ENCODE measurements at regions of chr2 and their contacts with region 1.

Region 1: GRCh38 chr2:50469784-50470183 is 562.1 kb downstream of the NRXN1 start:
- DNase-seq: no peak
- ATAC-seq: no peak
- H3K4me3 ChIP-seq: no peak overlapping the region
- H3K27ac ChIP-seq: no peak overlapping the region
- H3K4me1 ChIP-seq: no peaks in the 10 kb centered on the region
- H3K27me3 ChIP-seq: no peaks in the 10 kb centered on the region
- CTCF ChIP-seq: no peak

Region 2: GRCh38 chr2:49901202-49902065 is 568.4 kb before region 1 on chr2:
- intact Hi-C with region 1: loop called in 1 of 2 experiments (anchors 5 kb)
- DNase-seq: no peak
- ATAC-seq: no peak
- H3K4me3 ChIP-seq: no peak overlapping the region
- H3K27ac ChIP-seq: no peak overlapping the region
- H3K4me1 ChIP-seq: no peaks in the 10 kb centered on the region
- H3K27me3 ChIP-seq: no peaks in the 10 kb centered on the region
- CTCF ChIP-seq: no peak

Measured in psoas muscle (tissue), 8 donors.